ENCODE measurements at regions of chr9 and their contacts with region 1.

Region 1: DNA sequence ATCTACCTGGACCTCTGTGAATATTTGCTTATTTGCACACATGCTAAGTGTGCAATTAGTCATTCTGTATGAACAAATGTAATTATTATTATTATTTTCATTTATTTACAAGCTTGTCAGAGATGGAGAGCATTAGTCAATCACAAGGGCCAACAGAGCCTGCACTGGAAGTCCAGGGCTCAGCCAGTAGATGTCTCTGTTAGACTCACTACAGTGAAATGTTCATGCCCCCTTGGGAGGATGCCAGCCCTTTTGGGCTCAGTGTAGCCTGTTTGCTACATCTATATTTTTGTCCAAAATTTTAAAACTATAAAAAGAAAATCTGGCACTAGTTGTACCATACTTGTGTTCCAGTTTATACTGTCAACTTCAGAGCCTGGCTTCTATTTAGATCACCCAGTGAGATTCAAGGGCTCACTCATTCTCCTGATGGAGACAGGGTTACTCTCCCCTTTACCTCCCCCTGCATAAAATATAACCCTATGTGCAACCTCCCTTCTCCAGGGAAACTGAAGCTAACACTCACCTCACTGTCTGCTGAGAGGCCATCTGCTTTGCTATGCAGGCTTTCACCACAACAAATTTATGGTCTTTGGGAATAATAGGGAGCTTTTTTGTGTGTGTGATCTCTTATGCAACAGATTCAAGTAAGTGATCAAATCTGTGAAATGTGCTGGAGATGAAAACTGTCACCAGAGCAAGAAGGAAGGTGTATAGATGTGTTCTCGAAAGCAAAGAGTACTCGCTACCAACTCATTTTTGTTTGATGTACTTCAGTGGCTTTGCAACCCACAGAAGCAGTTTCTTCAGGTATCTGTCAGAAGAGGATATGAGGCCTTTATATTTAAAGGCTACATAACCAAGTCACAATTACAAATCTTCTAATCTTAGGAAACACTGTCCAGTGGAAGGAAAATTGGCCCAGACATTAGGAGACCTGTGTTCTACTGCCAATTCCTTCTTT is 99.9 kb upstream of the TLE4 start:
- DNase-seq: peak; percentile 42
- H3K4me3 Mint-ChIP-seq: no peak overlapping the region
- H3K27ac Mint-ChIP-seq: no peak overlapping the region
- H3K4me1 Mint-ChIP-seq: peaks cover 20% of the 10 kb centered on the region
- H3K27me3 Mint-ChIP-seq: no peaks in the 10 kb centered on the region

Region 2: DNA sequence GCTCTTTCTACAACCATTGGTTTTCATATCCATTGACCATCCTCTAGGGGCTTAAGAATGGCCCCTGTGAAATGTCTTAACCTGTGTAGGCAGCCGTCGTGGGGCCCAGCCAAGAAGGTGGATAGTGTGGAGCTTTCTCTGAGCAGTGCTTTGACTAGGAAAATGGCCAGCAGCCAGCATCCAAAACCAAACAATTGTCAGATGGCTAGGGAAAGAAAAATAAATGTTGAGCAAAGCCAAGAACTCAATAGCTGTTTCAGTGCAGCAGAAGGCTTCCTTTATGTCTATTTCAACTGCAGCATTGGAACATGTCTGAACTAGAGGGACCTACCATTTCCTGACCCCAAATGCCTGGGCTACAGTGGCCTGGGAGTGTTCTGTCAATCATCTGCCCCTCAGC is 474.9 kb after region 1 on chr9:
- CTCF ChIA-PET with region 1: no interaction called
- intact Hi-C with region 1: loop called (anchors 2 kb)
- DNase-seq: no peak
- H3K4me3 Mint-ChIP-seq: no peak overlapping the region
- H3K27ac Mint-ChIP-seq: no peak overlapping the region
- H3K4me1 Mint-ChIP-seq: no peaks in the 10 kb centered on the region
- H3K27me3 Mint-ChIP-seq: no peaks in the 10 kb centered on the region

Region 3: DNA sequence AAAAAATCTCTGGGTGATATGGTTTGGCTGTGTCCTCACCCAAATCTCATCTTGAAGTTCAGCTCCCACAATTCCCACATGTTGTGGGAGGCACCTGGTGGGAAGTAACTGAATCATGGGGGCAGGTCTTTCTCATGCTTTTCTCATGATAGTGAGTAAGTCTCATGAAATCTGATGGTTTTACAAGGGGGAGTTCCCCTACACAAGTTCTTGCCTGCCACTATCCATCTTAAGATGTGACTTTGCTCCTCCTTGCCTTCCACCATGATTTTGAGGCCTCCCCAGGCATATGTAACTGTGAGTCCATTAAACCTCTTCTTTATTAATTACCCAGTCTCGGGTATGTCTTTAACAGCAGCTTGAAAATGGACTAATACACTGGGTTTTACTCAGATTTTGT is 613.8 kb after region 1 on chr9:
- CTCF ChIA-PET with region 1: no interaction called
- intact Hi-C with region 1: loop called (anchors 5 kb)
- DNase-seq: peak; percentile 6
- H3K4me3 Mint-ChIP-seq: no peak overlapping the region
- H3K27ac Mint-ChIP-seq: no peak overlapping the region
- H3K4me1 Mint-ChIP-seq: peaks cover 20% of the 10 kb centered on the region
- H3K27me3 Mint-ChIP-seq: peaks cover 2% of the 10 kb centered on the region

Measured in activated naive CD4-positive, alpha-beta T cell treated with anti-CD3 and anti-CD28 coated beads for 36 hours (primary cell).